Colonic mucosa (tissue), 4 donors: ENCODE measurements at regions of chr20 and their contacts with region 1.

Region 1: GRCh38 chr20:50575847-50576720 is 65.9 kb downstream of the PTPN1 start:
- DNase-seq: peak; percentile 76
- H3K4me3 ChIP-seq: no peak overlapping the region
- H3K27ac ChIP-seq: no peak overlapping the region
- H3K4me1 ChIP-seq: peaks cover 4% of the 10 kb centered on the region
- H3K27me3 ChIP-seq: no peaks in the 10 kb centered on the region
- CTCF ChIP-seq: peak; percentile 78

Region 2: DNA sequence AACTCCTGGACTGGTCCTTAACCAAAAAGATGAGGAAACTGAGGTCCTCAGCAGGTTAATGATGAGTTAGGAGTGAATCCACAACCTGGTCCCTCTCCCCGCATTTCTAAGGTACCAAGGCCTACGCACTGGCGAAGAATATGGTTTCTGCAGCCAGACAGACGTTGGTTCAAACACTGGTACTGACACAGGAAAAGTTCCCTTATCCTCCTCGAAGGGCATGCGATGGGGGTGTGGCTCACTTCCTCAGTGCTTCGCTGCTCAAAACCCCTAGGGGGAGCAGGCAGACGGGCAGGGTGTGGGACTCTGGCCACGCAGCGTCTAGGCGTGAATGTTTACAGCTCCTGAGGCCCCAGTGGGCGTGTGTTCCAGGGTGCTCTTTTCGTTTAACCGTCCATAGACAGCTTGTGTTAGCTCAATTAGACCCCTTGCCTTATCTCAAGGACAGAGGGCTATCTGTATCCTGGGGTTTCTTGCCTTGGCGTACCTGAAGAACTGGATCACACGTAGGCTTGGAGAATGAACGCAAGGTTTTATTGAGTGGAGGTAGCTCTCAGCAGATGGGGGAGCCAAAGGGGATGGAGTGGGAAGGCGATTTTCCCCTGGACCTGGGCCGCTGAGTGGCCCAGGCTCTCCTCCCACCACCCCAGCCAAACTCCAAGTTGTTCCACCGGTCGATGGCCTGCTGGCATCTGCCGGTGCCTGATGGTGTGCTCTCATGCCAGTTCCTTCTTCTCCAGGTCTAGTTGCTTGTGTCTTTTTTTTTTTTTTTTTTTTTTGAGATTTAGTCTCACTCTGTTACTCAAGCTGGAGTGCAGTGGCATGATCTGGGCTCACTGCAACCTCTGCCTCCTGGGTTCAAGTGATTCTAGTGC is 97.7 kb before region 1 on chr20:
- intact Hi-C with region 1: loop called (anchors 5 kb)
- DNase-seq: peak; percentile 81
- H3K4me3 ChIP-seq: no peak overlapping the region
- H3K27ac ChIP-seq: no peak overlapping the region
- H3K4me1 ChIP-seq: no peaks in the 10 kb centered on the region
- H3K27me3 ChIP-seq: no peaks in the 10 kb centered on the region
- CTCF ChIP-seq: peak; percentile 67